GM12878 (cell line): ENCODE measurements at regions of chr7 and their contacts with region 1.

Region 1: DNA sequence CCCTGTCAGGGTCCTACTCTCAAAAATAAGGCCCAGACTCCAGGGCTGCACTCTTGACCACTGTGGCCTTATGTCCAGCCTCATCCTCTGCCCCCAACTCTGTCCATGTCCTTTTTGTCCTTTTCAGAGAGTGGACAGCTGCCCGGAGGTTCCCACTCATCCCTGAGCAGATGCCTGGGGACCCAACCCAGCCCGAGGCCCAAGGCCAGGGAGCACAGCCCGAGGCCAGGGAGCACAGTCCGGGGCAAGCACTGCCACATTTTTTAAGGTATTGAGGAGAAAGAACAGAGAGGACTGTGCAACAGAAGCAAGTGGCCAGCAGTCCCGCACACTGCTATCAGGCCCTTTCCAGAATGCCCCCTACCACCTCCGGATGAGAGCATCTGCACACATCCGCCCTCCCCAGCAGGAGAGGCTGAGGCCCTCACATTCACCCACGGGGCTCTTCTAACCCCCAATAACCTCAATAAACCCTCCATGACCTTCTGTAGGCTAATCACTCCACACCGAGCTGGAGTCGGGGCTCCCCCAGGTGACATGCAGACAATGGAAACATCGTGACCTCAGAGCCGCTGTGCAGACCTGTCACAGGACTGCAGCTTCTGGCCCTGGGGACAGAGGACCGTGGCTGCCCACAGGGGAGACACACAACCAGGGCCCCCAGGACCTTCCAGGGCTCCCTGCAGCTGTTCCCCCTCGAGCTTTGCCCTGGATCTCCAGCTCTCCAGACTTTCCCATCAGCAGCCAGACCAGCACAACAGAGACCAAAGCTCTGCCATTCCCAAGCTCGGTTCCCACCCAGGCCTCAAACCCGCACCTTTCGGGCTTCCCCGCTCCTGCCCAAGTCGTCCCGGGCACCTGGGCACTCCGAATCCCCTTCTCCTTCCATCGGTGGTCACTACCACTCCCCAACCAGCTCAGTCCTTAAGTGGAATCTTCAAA is 51.4 kb downstream of the CAMK2B start:
- DNase-seq: no peak
- ATAC-seq: peak; percentile 82
- H3K4me3 ChIP-seq: no peak overlapping the region
- H3K27ac ChIP-seq: no peak overlapping the region
- H3K4me1 ChIP-seq: no peaks in the 10 kb centered on the region
- H3K27me3 ChIP-seq: peaks cover 0 to 1% of the 10 kb centered on the region in 2 experiments; a peak in 1 of 4 replicates
- CTCF ChIP-seq: peak in 1 of 3 experiments; percentile 16; a peak in 1 of 6 replicates
- EP300 ChIP-seq: 0 out of 4 replicates have a peak, but pooled peaks of 1 of the 2 experiments have one; percentile 22
- POLR2A ChIP-seq: no peak
- RAD21 ChIP-seq: 0 out of 2 replicates have a peak, but pooled peaks have one; percentile 24

Region 2: DNA sequence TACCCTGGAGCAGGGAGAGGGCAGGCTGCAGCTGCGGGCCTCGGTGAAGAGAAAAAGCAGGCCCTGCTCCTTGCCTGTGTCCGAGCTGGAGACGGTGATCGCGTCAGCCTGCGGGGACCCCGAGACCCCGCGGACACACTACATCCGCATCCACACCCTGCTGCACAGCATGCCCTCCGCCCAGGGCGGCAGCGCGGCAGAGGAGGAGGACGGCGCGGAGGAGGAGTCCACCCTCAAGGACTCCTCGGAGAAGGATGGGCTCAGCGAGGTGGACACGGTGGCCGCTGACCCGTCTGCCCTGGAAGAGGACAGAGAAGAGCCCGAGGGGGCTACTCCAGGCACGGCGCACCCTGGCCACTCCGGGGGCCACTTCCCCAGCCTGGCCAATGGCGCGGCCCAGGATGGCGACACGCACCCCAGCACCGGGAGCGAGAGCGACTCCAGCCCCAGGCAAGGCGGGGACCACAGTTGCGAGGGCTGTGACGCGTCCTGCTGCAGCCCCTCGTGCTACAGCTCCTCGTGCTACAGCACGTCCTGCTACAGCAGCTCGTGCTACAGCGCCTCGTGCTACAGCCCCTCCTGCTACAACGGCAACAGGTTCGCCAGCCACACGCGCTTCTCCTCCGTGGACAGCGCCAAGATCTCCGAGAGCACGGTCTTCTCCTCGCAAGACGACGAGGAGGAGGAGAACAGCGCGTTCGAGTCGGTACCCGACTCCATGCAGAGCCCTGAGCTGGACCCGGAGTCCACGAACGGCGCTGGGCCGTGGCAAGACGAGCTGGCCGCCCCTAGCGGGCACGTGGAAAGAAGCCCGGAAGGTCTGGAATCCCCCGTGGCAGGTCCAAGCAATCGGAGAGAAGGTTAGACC is 829.0 kb before region 1 on chr7:
- CTCF ChIA-PET with region 1: no interaction called
- POLR2A ChIA-PET with region 1: no interaction called
- RAD21 ChIA-PET with region 1: no interaction called
- SMC1A ChIA-PET with region 1: no interaction called
- in situ Hi-C with region 1: no loop called
- intact Hi-C with region 1: no loop called
- DNase-seq: no peak
- ATAC-seq: no peak
- H3K4me3 ChIP-seq: no peak overlapping the region
- H3K27ac ChIP-seq: no peak overlapping the region
- H3K4me1 ChIP-seq: no peaks in the 10 kb centered on the region
- H3K27me3 ChIP-seq: no peaks in the 10 kb centered on the region; a peak in 1 of 4 replicates
- CTCF ChIP-seq: no peak
- EP300 ChIP-seq: no peak
- POLR2A ChIP-seq: no peak
- RAD21 ChIP-seq: no peak

Region 3: DNA sequence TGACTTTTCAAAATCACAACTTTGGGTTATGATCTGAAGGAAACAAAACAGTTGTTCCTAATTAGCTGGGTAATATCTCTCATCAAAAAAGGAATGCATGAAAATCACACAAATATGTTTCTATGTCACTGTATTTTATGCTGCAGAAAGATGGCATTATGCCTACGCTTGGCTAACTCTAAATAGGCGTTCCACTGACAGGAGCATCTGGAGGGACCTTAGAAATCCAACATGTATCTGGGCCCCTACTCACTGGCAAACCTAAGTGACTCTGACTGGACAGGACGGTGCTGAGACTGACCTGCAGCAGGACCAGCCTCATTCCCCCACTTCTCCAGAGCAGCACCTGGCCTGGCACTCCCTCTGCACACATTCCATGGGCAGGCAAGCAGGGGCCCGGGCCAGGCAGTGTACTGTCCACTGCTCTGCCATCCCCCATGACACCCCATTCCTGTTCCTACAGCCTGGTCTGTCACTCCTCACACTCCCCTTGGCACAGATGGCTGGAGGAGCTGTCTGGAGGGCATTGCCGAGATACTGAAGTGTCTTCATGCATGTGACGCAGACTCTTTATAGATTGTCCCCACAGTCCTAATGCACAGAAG is 130.2 kb before region 1 on chr7:
- CTCF ChIA-PET with region 1: no interaction called
- POLR2A ChIA-PET with region 1: no interaction called
- RAD21 ChIA-PET with region 1: no interaction called
- SMC1A ChIA-PET with region 1: no interaction called
- in situ Hi-C with region 1: no loop called
- intact Hi-C with region 1: no loop called
- DNase-seq: no peak
- ATAC-seq: no peak
- H3K4me3 ChIP-seq: no peak overlapping the region
- H3K27ac ChIP-seq: no peak overlapping the region
- H3K4me1 ChIP-seq: no peaks in the 10 kb centered on the region
- H3K27me3 ChIP-seq: no peaks in the 10 kb centered on the region
- CTCF ChIP-seq: no peak
- EP300 ChIP-seq: no peak
- POLR2A ChIP-seq: no peak
- RAD21 ChIP-seq: no peak

Region 4: GRCh38 chr7:44257618-44258422 is 16.1 kb before region 1 on chr7:
- CTCF ChIA-PET with region 1: interaction called, 6 read pairs
- POLR2A ChIA-PET with region 1: interaction called, 6 read pairs
- RAD21 ChIA-PET with region 1: interaction called, 10 read pairs
- SMC1A ChIA-PET with region 1: interaction called, 5 read pairs
- in situ Hi-C with region 1: no loop called
- intact Hi-C with region 1: no loop called
- DNase-seq: peak; percentile 89
- ATAC-seq: peak; percentile 97
- H3K4me3 ChIP-seq: no peak overlapping the region
- H3K27ac ChIP-seq: peak overlapping the region; percentile 94
- H3K4me1 ChIP-seq: peaks cover 28% of the 10 kb centered on the region
- H3K27me3 ChIP-seq: no peaks in the 10 kb centered on the region
- CTCF ChIP-seq: peak in 1 of 3 experiments; percentile 14; a peak in 1 of 6 replicates
- EP300 ChIP-seq: peak; percentile 69 to 93
- POLR2A ChIP-seq: peak; percentile 59; the same call in 1 of the 2 replicates
- RAD21 ChIP-seq: peak; percentile 19; the same call in 1 of the 2 replicates

Region 5: DNA sequence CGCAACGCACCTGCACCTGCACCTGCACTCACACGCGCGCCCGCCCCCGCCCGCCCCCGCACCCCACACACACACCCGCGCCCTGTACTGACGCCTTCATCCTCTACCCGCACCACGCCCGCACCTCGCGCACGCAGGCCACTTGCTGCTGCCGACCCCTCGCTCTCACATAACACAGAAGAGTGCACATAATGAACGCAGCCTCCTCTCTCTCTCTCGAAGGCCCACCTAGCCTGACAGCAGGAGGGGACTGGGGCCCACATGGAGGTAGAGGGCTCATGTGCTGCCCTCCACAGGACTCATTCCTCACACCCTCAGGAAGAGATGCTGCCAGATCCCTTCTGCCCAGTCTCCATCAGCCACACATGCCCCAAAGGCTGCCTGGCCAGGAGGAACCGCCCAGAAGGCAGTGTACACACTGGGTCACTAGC is 51.9 kb after region 1 on chr7:
- CTCF ChIA-PET with region 1: no interaction called
- POLR2A ChIA-PET with region 1: no interaction called
- RAD21 ChIA-PET with region 1: no interaction called
- SMC1A ChIA-PET with region 1: no interaction called
- in situ Hi-C with region 1: no loop called
- intact Hi-C with region 1: no loop called
- DNase-seq: no peak
- ATAC-seq: no peak; the same call in 2 of the 3 replicates
- H3K4me3 ChIP-seq: no peak overlapping the region
- H3K27ac ChIP-seq: no peak overlapping the region
- H3K4me1 ChIP-seq: no peaks in the 10 kb centered on the region
- H3K27me3 ChIP-seq: peaks cover 3 to 7% of the 10 kb centered on the region in 2 experiments; a peak in 3 of 4 replicates
- CTCF ChIP-seq: no peak
- EP300 ChIP-seq: no peak
- POLR2A ChIP-seq: no peak
- RAD21 ChIP-seq: no peak

Region 6: GRCh38 chr7:44561962-44562621 is 288.1 kb after region 1 on chr7:
- CTCF ChIA-PET with region 1: no interaction called
- POLR2A ChIA-PET with region 1: no interaction called
- RAD21 ChIA-PET with region 1: no interaction called
- SMC1A ChIA-PET with region 1: no interaction called
- in situ Hi-C with region 1: no loop called
- intact Hi-C with region 1: no loop called
- DNase-seq: no peak
- ATAC-seq: no peak
- H3K4me3 ChIP-seq: no peak overlapping the region
- H3K27ac ChIP-seq: no peak overlapping the region
- H3K4me1 ChIP-seq: no peaks in the 10 kb centered on the region
- H3K27me3 ChIP-seq: no peaks in the 10 kb centered on the region
- CTCF ChIP-seq: no peak
- EP300 ChIP-seq: no peak
- POLR2A ChIP-seq: no peak; the same call in 1 of the 2 replicates
- RAD21 ChIP-seq: no peak